ENCODE measurements at regions of chr11 and their contacts with region 1.

Region 1: DNA sequence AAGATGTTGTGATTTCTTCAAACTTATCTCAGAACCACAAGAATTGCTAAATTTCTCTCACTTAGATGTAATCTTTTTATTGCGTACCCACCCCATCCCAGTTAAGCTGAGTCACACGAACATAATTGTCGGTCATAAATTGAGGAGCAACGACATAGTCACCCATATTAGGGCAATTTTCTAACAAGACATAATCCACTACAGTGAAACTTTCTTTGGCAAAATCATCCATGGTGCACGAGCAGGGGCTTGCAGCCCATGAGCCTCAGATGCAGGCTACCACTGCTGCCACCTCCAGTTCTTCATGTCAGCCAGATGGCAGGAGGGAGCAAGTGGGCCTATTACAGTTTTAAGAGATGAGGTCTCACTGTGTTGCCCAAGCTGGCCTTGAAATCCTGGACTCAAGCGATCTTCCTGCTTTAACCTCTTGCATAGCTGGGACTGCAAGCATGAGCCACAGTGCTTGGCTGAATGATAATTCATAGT is 70.3 kb upstream of the GRK2 start:
- DNase-seq: peak; percentile 84
- ATAC-seq: peak; percentile 91
- H3K4me3 ChIP-seq: 0 out of 2 replicates have a peak overlapping the region, but pooled peaks have one; percentile 6
- H3K27ac ChIP-seq: peak overlapping the region; percentile 49
- H3K4me1 ChIP-seq: peaks cover 23% of the 10 kb centered on the region
- H3K27me3 ChIP-seq: no peaks in the 10 kb centered on the region
- CTCF ChIP-seq: peak; percentile 33; the same call in 1 of the 2 replicates

Region 2: DNA sequence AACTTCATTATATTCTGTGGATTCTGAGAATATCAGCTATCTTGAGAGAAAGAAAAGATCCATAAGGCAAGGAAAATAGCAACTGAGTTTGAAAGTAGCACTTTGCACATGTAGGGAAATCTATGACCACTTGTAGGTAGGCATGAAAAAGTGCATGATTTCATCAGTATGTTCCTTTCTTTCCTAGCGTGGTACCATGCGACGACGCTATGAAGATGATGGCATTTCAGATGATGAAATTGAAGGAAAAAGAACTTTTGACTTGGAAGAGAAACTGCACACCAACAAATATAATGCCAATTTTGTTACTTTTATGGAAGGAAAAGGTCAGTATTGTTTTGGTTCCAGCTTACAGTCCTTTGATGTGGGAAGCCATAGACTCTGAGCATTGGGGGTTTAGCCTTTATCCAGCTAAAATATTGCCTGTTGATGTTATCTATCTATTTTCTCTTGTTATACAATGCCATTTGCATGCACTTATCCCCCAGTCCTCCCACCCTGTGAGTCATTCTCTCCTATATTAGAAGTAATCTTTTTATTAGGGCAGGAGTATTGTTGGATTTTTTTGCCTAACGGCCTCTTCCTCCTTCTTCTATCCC is 16.0 kb before region 1 on chr11:
- CTCF ChIA-PET with region 1: no interaction called
- POLR2A ChIA-PET with region 1: no interaction called
- intact Hi-C with region 1: loop called (anchors 2 kb)
- DNase-seq: peak; percentile 48
- ATAC-seq: peak; percentile 75
- H3K4me3 ChIP-seq: no peak overlapping the region
- H3K27ac ChIP-seq: peak overlapping the region; percentile 42
- H3K4me1 ChIP-seq: peaks cover 17% of the 10 kb centered on the region
- H3K27me3 ChIP-seq: no peaks in the 10 kb centered on the region
- CTCF ChIP-seq: no peak